Posterior cingulate gyrus (tissue), 11 donors: ENCODE measurements at regions of chr4 and their contacts with region 1.

Region 1: GRCh38 chr4:47032415-47033106 is 1.2 kb downstream of the GABRB1 start:
- DNase-seq: peak; percentile 67 to 96 (median 82)

Region 2: DNA sequence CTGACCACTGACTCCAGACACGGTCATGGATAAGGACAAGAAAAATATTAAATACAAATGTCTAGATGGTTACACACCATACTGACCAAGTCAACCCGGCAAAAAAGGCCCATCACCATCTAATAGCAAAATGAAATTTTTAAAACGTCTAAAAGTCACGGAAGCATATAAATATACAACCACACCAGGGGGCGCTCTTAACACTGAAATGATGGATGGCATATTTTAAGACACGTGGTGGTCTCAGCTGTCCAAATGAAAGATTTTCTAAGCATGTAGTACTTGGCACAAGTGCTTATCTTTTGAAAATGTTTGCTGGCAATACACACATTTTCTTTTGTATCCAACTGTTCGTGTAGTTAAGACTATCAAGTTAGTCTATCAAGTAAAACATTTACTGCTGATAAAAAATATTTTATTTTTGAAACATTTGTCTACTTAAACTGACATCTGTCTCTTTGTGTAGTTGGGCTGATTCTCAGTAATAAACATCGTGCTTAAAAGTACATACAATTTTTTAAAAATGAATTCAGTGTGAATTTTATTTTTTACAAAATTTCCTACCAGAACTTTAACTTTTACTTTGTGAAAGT is 188.1 kb before region 1 on chr4:
- intact Hi-C with region 1: loop called (anchors 2 kb)
- DNase-seq: peak in 6 of 10 donors; percentile 5 to 54 (median 27)

Region 3: GRCh38 chr4:46931981-46932380 is 100.6 kb before region 1 on chr4:
- intact Hi-C with region 1: loop called (anchors 5 kb)
- DNase-seq: peak in 6 of 10 donors; percentile 39 to 82 (median 50)

Region 4: GRCh38 chr4:47143261-47143660 is 110.7 kb after region 1 on chr4:
- intact Hi-C with region 1: no loop called
- DNase-seq: no peak

Region 5: GRCh38 chr4:47383829-47384427 is 351.4 kb after region 1 on chr4:
- intact Hi-C with region 1: loop called (anchors 5 kb)
- DNase-seq: no peak